Aorta (tissue), 5 donors: ENCODE measurements at regions of chr10 and their contacts with region 1.

Region 1: DNA sequence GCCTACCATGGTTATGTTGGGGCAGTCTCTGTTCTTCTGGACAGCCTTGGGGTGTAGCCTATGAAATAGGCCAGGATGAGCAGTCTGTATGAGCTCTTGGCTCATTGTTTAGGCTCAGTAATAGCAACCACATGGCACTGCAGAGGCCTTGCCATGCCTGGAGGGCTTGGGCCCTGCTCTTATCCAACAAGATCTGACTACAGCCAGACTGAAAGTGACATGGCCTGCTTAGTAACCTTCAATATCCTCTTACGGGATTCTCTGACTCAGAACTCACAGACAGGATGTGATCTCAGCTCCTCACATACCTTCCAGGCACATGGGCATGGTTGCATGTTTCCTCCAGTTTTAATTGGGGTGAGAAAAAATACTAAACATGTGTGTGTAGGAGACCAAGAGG is 289.3 kb downstream of the PTEN start:
- DNase-seq: peak in 1 of 2 donors; percentile 64
- ATAC-seq: peak; percentile 48
- H3K4me3 ChIP-seq: no peak overlapping the region
- H3K27ac ChIP-seq: no peak overlapping the region
- H3K4me1 ChIP-seq: peaks cover 3 to 4% of the 10 kb centered on the region in 2 donors
- H3K27me3 ChIP-seq: no peaks in the 10 kb centered on the region

Region 2: GRCh38 chr10:88059190-88059589 is 93.5 kb before region 1 on chr10:
- intact Hi-C with region 1: loop called in 1 of 2 experiments (anchors 10 kb)
- DNase-seq: no peak
- ATAC-seq: no peak
- H3K4me3 ChIP-seq: no peak overlapping the region
- H3K27ac ChIP-seq: no peak overlapping the region
- H3K4me1 ChIP-seq: peaks cover 0 to 4% of the 10 kb centered on the region in 2 donors
- H3K27me3 ChIP-seq: no peaks in the 10 kb centered on the region